Aorta (tissue), 5 donors: ENCODE measurements at regions of chr1 and their contacts with region 1.

Region 1: GRCh38 chr1:183655562-183656075 is 2.5 kb upstream of the APOBEC4 start:
- DNase-seq: peak; percentile 83 to 91
- ATAC-seq: peak; percentile 94
- H3K4me3 ChIP-seq: no peak overlapping the region
- H3K27ac ChIP-seq: no peak overlapping the region
- H3K4me1 ChIP-seq: no peaks in the 10 kb centered on the region
- H3K27me3 ChIP-seq: no peaks in the 10 kb centered on the region

Region 2: GRCh38 chr1:183812686-183813569 is 157.3 kb after region 1 on chr1:
- intact Hi-C with region 1: no loop called
- DNase-seq: no peak
- ATAC-seq: no peak
- H3K4me3 ChIP-seq: no peak overlapping the region
- H3K27ac ChIP-seq: no peak overlapping the region
- H3K4me1 ChIP-seq: peaks cover 0 to 2% of the 10 kb centered on the region in 2 donors
- H3K27me3 ChIP-seq: no peaks in the 10 kb centered on the region

Region 3: DNA sequence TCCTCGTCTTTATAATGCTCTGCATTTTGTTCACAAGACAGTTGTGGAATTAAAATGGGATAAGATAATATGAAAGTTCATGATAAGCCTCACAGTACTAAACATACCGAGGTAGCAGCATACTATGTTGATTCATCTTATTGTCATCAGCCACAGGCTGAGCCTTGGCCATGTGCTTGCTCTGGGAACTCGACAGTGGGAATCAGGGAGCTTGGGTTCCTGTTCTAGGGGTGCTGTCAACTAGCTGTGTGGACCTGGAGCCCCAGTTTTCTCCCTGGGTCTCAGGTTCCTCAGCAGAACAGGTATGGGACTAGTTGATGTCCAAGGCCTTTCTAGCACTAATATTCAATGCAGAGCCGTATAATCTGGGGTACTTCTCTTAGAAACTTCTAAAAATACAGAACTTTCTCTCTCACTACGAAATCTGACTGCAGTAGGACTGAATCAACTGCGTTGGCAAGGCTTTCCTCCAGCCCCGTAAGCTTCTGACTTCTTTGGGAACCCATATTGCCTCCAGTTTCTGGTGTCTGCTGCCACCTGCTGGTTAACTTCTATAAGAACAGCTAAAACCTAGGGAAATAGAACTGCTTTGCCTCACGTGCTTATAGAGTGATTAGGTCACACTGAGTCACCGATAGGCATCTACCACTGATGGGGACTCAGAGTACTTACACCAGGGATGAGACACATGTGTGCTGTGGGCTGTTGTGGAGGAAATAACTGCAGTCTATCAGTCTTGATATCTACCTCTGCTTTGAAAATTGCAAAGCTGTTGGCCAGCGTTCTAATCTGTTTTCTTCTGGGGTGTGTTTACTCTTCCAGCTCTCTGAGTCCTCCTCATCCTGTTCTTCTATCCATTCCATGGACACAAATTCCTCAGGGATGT is 260.2 kb after region 1 on chr1:
- intact Hi-C with region 1: loop called (anchors 1 to 2 kb)
- DNase-seq: peak; percentile 83 to 84
- ATAC-seq: peak; percentile 91
- H3K4me3 ChIP-seq: no peak overlapping the region
- H3K27ac ChIP-seq: no peak overlapping the region
- H3K4me1 ChIP-seq: no peaks in the 10 kb centered on the region
- H3K27me3 ChIP-seq: no peaks in the 10 kb centered on the region